ENCODE measurements at regions of chr20 and their contacts with region 1.

Region 1: DNA sequence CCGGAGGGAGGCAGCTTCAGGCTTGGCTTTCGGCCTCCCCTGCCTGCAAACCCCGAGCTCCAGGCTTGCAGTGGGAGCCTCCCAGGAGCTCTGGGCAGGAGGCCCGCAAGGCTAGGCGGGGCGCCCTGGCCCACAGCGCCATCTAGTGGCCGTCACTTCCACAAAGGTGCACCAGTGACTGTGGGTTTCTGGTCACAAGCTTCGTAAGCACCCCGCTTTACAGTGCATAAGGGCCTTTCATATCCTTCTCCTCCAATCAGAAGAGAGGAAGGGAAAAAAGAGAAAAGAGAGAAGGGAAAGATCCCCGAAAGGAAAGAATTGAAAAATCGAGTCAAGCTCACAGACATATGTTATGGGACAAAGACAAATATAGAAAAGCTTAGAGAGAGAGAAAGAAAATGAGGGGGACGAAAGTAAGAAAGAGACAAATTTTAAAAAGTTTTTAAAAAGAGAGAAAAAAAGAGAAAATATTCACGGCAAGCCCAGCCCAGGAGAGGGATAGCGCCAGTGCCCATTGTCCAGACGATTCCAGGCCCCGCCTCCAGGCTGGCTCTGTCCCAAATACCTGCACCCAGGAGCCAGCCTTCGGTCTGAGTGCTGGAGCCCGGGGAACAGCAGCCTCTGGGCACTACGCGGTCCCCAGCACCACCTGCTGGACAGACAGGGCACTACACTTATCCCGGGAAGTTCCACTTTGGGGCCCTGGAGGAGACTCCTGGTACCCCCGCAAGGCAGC is 207.1 kb downstream of the PREX1 start:
- DNase-seq: peak; percentile 51 to 78
- ATAC-seq: peak; percentile 87 to 90
- H3K4me3 ChIP-seq: peak overlapping the region; percentile 2 to 33 (median 16)
- H3K27ac ChIP-seq: no peak overlapping the region
- H3K4me1 ChIP-seq: peaks cover 5 to 11% of the 10 kb centered on the region in 2 donors
- H3K27me3 ChIP-seq: no peaks in the 10 kb centered on the region
- CTCF ChIP-seq: peak; percentile 83 to 90 (median 86)
- POLR2A ChIP-seq: no peak

Region 2: GRCh38 chr20:47196091-47197081 is 1424.3 kb before region 1 on chr20:
- in situ Hi-C with region 1: loop called in 2 of 4 experiments (anchors 25 kb)
- intact Hi-C with region 1: no loop called
- DNase-seq: peak; percentile 13 to 45
- ATAC-seq: peak; percentile 47 to 66
- H3K4me3 ChIP-seq: no peak overlapping the region
- H3K27ac ChIP-seq: no peak overlapping the region
- H3K4me1 ChIP-seq: no peaks in the 10 kb centered on the region
- H3K27me3 ChIP-seq: no peaks in the 10 kb centered on the region
- CTCF ChIP-seq: peak; percentile 87 to 97 (median 91)
- POLR2A ChIP-seq: no peak

Region 3: GRCh38 chr20:47663333-47664067 is 957.2 kb before region 1 on chr20:
- in situ Hi-C with region 1: loop called in 1 of 4 experiments (anchors 5 kb)
- intact Hi-C with region 1: loop called (anchors 1 kb)
- DNase-seq: peak in 1 of 2 donors; percentile 65
- ATAC-seq: peak; percentile 43 to 77
- H3K4me3 ChIP-seq: no peak overlapping the region
- H3K27ac ChIP-seq: no peak overlapping the region
- H3K4me1 ChIP-seq: no peaks in the 10 kb centered on the region
- H3K27me3 ChIP-seq: no peaks in the 10 kb centered on the region
- CTCF ChIP-seq: peak; percentile 74 to 96 (median 86)
- POLR2A ChIP-seq: no peak

Region 4: DNA sequence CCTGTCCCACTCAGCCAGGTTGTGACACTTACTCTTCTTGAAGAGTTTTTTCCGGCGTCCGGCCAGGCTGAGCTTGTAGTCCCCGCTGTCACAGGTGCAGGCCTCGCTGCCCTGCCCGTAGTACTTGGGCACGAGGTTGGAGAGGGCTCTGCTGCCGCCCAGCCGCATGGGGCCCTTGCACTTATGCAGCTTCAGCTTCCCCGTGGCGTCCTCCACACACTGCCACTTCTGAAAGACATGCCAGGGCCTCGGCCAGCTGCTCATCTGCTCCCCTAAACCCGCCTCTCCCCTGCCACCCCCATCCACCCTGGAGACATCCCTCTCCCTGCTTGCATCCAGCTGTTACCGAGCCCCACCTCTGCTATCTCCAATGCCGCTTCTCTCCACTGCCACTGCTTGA is 948.5 kb before region 1 on chr20:
- in situ Hi-C with region 1: loop called in 2 of 4 experiments (anchors 5 kb)
- intact Hi-C with region 1: no loop called
- DNase-seq: no peak
- ATAC-seq: no peak
- H3K4me3 ChIP-seq: no peak overlapping the region
- H3K27ac ChIP-seq: no peak overlapping the region
- H3K4me1 ChIP-seq: no peaks in the 10 kb centered on the region
- H3K27me3 ChIP-seq: no peaks in the 10 kb centered on the region
- CTCF ChIP-seq: no peak
- POLR2A ChIP-seq: no peak

Region 5: GRCh38 chr20:47677635-47678453 is 942.8 kb before region 1 on chr20:
- in situ Hi-C with region 1: loop called in 3 of 4 experiments (anchors 5 to 10 kb)
- intact Hi-C with region 1: loop called (anchors 2 kb)
- DNase-seq: no peak
- ATAC-seq: no peak
- H3K4me3 ChIP-seq: no peak overlapping the region
- H3K27ac ChIP-seq: no peak overlapping the region
- H3K4me1 ChIP-seq: no peaks in the 10 kb centered on the region
- H3K27me3 ChIP-seq: no peaks in the 10 kb centered on the region
- CTCF ChIP-seq: peak; percentile 35 to 72 (median 64)
- POLR2A ChIP-seq: no peak

Region 6: DNA sequence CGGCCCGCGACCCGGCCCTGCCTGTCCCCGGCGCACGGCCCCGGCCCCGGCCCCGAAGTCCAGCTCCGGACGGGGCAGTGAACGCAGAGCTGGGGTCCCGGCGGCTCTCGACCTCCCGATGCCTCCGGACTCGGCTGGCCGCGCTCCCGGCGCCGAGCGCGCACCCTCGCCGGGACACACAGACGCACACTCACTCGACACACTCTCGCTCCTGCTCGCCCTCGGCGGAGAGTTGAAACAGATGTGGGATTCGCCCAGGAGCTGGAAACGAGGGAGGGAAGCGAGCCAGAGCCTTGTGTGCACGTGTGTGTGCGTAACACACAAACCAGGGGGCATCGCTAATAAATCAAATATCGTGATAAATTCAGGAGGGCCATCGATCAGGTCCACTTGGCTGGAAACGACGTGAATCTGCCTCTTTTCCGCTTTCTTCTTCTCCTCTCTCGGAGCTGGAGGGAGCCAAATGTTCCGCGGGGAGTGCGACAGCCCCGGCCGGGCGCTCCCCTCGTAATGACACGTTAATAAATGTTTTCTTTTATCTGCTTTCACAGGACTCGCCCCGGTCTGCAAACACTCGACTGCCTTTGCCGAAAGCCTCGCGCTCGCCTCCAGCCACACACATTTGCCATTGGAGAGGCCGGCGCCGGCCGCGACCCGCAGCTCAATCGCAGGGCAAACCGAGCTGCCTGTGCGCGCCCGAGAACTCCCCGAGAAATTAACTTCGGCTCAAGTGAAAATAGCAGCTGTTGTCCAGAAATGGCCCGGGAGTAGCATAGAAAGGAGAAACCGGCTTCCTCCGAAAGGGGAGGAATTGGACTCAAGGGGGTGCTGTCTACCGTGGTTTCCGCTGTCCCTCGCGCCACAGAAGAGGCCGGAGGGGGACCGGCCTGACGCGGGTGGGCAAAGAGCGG is 834.6 kb before region 1 on chr20:
- in situ Hi-C with region 1: loop called in 3 of 4 experiments (anchors 5 to 25 kb)
- intact Hi-C with region 1: loop called (anchors 1 kb)
- DNase-seq: peak; percentile 31 to 44
- ATAC-seq: peak; percentile 70 to 77
- H3K4me3 ChIP-seq: peak overlapping the region; percentile 52 to 70 (median 53)
- H3K27ac ChIP-seq: peak overlapping the region; percentile 55 to 72 (median 64)
- H3K4me1 ChIP-seq: peaks cover 7 to 12% of the 10 kb centered on the region in 2 donors
- H3K27me3 ChIP-seq: peaks cover 21 to 35% (median 23%) of the 10 kb centered on the region in 3 donors
- CTCF ChIP-seq: peak; percentile 23 to 62 (median 58)
- POLR2A ChIP-seq: peak in 1 of 2 donors; percentile 29

Region 7: DNA sequence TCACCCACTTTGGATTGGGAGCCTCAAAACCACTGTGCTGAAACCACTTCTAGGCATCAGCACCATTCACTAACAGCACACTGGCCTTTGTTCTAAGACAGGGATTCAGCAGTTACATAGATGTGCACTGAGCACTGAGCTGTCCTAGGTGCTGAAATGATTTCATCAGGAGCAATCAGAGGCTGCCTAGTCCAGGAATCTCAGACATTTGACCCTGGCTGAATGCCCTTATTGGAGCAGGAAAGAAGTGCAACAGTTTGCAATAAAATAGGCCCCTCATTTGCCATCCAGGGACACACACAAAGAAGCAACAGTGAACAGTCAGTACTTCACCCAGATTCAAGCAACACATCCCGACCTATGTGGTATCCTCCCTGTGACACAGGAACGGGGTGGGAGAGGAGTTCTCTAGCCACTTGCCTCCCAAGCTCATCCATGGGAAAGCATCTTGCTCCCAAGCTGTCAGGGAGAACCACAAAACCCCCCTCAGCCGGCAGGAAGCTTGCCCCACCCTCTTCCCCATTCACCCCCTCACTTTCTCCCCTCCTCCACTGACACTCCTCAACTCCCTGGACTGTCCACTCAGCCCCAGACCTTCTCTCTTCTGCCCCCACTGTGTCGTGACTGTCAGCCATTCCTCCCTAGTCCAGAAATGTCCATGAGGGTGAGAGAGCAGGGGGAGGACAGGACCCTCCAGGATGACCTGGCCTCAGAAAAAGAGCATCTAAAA is 97.3 kb before region 1 on chr20:
- in situ Hi-C with region 1: no loop called
- intact Hi-C with region 1: no loop called
- DNase-seq: no peak
- ATAC-seq: no peak
- H3K4me3 ChIP-seq: no peak overlapping the region
- H3K27ac ChIP-seq: no peak overlapping the region
- H3K4me1 ChIP-seq: no peaks in the 10 kb centered on the region
- H3K27me3 ChIP-seq: no peaks in the 10 kb centered on the region
- CTCF ChIP-seq: no peak
- POLR2A ChIP-seq: no peak

Region 8: DNA sequence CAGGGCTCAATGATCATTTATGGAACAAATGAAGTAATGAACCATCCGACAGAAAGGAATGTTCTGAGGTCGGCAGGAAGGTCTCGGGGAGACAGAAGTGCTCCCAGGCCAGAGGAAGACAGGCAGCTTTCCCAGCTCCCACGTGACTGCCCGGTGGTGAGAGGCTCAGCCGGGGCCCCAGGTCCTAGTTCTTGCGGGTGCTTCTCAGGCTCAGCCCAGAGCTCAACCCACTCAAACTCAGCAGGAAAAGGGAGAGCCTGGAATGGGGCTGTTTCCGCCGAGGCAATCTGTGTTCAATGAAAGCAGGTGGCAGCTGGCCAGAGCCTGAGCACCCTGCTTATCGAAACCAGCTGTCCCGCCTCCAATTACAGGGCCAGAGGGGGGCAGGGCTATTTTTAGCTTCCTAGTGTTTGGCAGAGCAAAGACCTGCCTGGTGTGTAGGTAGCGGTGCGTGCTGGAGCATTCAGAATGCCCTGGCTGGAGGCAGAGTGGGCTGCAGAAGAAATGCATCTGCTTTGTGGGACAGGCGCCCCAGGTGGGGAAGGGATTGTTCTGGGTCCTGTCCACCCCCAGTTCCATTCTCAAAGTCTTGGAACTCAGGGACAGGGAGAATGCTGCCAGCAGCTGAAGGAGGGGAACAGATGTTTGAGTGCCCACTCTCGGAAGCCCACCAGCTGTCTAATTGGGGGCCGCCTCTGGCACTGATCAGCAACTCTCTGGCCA is 62.0 kb after region 1 on chr20:
- in situ Hi-C with region 1: no loop called
- intact Hi-C with region 1: no loop called
- DNase-seq: peak; percentile 29 to 67
- ATAC-seq: peak; percentile 66 to 86
- H3K4me3 ChIP-seq: peak overlapping the region; percentile 30 to 42 (median 36)
- H3K27ac ChIP-seq: peak overlapping the region; percentile 52 to 78 (median 73)
- H3K4me1 ChIP-seq: peaks cover 57 to 58% of the 10 kb centered on the region in 2 donors
- H3K27me3 ChIP-seq: no peaks in the 10 kb centered on the region
- CTCF ChIP-seq: no peak
- POLR2A ChIP-seq: no peak

Region 9: GRCh38 chr20:49024220-49024619 is 403.5 kb after region 1 on chr20:
- in situ Hi-C with region 1: no loop called
- intact Hi-C with region 1: no loop called
- DNase-seq: no peak
- ATAC-seq: no peak
- H3K4me3 ChIP-seq: no peak overlapping the region
- H3K27ac ChIP-seq: no peak overlapping the region
- H3K4me1 ChIP-seq: no peaks in the 10 kb centered on the region
- H3K27me3 ChIP-seq: no peaks in the 10 kb centered on the region
- CTCF ChIP-seq: no peak
- POLR2A ChIP-seq: no peak

Measured in gastrocnemius medialis (tissue), 4 donors.